ENCODE measurements at regions of chr15 and their contacts with region 1.

Region 1: GRCh38 chr15:69185706-69186105 is 25.3 kb downstream of the GLCE start:
- DNase-seq: no peak
- H3K4me3 ChIP-seq: no peak overlapping the region
- H3K27ac ChIP-seq: no peak overlapping the region
- H3K4me1 ChIP-seq: no peaks in the 10 kb centered on the region
- H3K27me3 ChIP-seq: no peaks in the 10 kb centered on the region
- CTCF ChIP-seq: no peak
- EP300 ChIP-seq: no peak
- POLR2A ChIP-seq: no peak

Region 2: GRCh38 chr15:69225355-69226025 is 39.8 kb after region 1 on chr15:
- in situ Hi-C with region 1: no loop called
- intact Hi-C with region 1: no loop called
- DNase-seq: no peak
- H3K4me3 ChIP-seq: no peak overlapping the region
- H3K27ac ChIP-seq: peak overlapping the region in 3 of 4 donors; percentile 50 to 60 (median 57)
- H3K4me1 ChIP-seq: peaks cover 0 to 30% (median 9%) of the 10 kb centered on the region in 4 donors
- H3K27me3 ChIP-seq: no peaks in the 10 kb centered on the region
- CTCF ChIP-seq: peak in 4 of 5 experiments; percentile 19 to 44 (median 27)
- EP300 ChIP-seq: no peak
- POLR2A ChIP-seq: no peak

Region 3: DNA sequence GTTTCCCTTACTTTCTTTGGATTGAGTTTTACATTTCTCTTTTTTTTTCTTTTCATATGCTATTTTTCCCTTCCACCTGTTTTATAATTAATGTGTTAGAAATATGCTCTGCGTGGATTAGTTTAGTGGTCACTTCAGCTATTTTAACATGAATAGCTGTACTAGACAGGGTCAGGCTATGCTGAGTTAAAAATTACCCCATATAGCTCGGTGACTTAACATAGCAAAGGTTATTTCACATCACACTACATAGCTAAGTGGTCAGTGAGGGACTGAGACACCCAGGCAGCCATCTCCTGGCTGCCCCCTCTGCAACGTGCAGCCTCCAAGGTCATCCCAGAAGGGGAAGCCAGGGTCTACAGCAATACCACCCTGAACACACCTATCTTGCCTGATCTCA is 181.5 kb after region 1 on chr15:
- in situ Hi-C with region 1: no loop called
- intact Hi-C with region 1: loop called (anchors 2 kb)
- DNase-seq: no peak
- H3K4me3 ChIP-seq: no peak overlapping the region
- H3K27ac ChIP-seq: no peak overlapping the region
- H3K4me1 ChIP-seq: peaks cover 0 to 6% (median 2%) of the 10 kb centered on the region in 4 donors
- H3K27me3 ChIP-seq: no peaks in the 10 kb centered on the region
- CTCF ChIP-seq: no peak
- EP300 ChIP-seq: no peak
- POLR2A ChIP-seq: no peak

Measured in transverse colon (tissue), 4 donors.